Activated naive CD4-positive, alpha-beta T cell treated with anti-CD3 and anti-CD28 coated beads, Interleukin-2, amount 10 ng/mL, durations not matched to agents 7 days and 5 days (primary cell): ENCODE measurements at regions of chr7 and their contacts with region 1.

Region 1: GRCh38 chr7:65307651-65308299 is 65.9 kb upstream of the ZNF92 start:
- DNase-seq: peak; percentile 53
- H3K4me3 Mint-ChIP-seq: no peak overlapping the region
- H3K27ac Mint-ChIP-seq: no peak overlapping the region
- H3K4me1 Mint-ChIP-seq: no peaks in the 10 kb centered on the region
- H3K27me3 Mint-ChIP-seq: no peaks in the 10 kb centered on the region

Region 2: DNA sequence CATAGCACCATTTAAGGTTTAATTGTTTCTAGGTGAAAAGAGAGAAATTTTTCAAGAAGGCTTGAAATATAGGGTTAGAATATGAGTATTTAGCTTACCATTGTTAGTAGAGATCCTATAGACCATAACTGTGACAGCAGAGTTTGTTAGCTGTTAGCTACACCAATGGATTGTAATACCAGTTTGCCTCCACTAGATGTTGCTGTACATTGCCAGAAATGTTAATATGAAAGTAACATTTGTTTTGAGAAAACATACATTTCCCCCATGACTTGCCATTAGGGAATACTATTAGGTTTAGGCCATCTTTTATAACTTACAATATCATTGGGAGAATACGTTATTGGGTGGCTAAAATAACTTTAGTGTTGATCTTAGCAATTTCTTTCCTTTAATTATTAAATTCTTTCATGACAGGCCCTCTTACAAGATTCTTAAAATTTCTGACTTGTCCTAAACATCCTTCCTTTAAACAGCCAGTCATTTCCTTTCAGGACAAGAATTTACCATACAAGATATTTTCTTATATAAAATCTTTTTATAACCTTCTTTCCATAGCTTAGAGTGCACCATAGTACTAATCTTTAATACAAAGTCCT is 356.4 kb before region 1 on chr7:
- CTCF ChIA-PET with region 1: interaction called, 23 read pairs
- DNase-seq: no peak
- H3K4me3 Mint-ChIP-seq: no peak overlapping the region
- H3K27ac Mint-ChIP-seq: no peak overlapping the region
- H3K4me1 Mint-ChIP-seq: no peaks in the 10 kb centered on the region
- H3K27me3 Mint-ChIP-seq: peaks cover 27% of the 10 kb centered on the region

Region 3: DNA sequence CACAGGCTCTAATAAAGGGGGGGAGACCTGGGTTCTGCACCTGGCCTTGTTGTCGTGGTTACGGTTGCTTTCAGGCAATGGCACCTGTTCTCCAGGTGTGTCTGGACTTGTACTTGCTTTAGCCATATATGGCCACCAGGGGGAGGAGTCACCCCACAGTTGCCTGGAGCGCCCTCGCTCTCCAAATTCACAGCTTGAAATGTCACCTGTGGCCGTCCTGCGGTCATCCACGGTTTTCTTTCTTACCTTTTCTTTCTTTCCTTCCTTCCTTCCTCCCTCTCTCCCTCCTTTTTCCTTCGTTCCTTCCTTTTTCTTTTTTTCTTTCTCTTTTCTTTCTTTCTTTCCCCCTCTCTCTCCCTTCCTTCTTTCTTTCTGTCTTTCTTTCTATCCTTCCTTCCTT is 91.3 kb before region 1 on chr7:
- CTCF ChIA-PET with region 1: interaction called, 33 read pairs
- DNase-seq: peak; percentile 69
- H3K4me3 Mint-ChIP-seq: no peak overlapping the region
- H3K27ac Mint-ChIP-seq: no peak overlapping the region
- H3K4me1 Mint-ChIP-seq: no peaks in the 10 kb centered on the region
- H3K27me3 Mint-ChIP-seq: no peaks in the 10 kb centered on the region

Region 4: GRCh38 chr7:65411249-65411648 is 103.5 kb after region 1 on chr7:
- CTCF ChIA-PET with region 1: no interaction called
- DNase-seq: no peak
- H3K4me3 Mint-ChIP-seq: no peak overlapping the region
- H3K27ac Mint-ChIP-seq: no peak overlapping the region
- H3K4me1 Mint-ChIP-seq: no peaks in the 10 kb centered on the region
- H3K27me3 Mint-ChIP-seq: peaks cover 7% of the 10 kb centered on the region